Sigmoid colon (tissue), 7 donors: ENCODE measurements at regions of chr2 and their contacts with region 1.

Region 1: GRCh38 chr2:30404319-30404953 is 42.6 kb upstream of the LCLAT1 start:
- DNase-seq: no peak
- H3K4me3 ChIP-seq: no peak overlapping the region
- H3K27ac ChIP-seq: peak overlapping the region; percentile 39 to 70 (median 60)
- H3K4me1 ChIP-seq: peaks cover 0 to 99% (median 92%) of the 10 kb centered on the region in 4 donors
- H3K27me3 ChIP-seq: no peaks in the 10 kb centered on the region
- CTCF ChIP-seq: no peak
- EP300 ChIP-seq: no peak
- POLR2A ChIP-seq: no peak

Region 2: DNA sequence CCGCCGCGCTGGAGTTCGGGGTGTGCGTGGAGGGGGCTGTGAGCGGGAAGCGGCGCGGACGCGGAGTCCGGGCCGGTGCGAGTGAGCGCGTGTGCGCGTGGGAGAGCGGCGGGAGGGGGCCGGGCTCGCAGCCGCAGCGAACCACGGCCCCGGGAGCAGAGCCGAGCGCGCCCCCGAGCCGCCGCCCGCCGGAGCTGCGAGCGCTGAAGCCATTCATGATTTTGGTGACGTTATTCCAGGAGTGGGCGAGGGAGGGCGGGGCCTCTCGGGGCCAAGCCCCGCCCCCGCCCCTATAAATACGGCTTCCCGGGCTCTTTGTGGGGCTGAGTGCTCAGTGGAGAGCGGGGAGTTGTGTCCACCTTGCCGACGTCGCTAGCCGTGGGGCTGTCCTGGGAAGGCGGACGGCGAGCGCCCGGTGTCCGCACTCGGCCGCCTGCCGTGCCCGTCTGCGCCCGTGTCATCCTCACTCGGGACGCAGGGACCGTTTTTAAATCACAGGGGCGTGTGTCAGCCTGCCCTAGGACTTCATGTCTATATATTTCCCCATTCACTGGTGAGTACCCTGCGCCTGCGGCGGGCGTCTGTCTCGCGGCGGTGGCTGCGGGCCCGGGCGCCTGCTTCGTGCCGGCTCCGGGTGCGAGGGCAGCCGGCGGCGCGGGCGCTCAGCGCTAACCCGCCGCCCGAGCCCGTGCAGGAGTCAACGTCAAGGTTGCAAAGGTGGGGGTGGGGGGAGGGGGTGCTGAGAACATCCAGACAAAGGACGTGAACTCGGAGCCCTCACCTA is 173.0 kb before region 1 on chr2 and contains the start of gene LBH:
- intact Hi-C with region 1: loop called (anchors 5 kb)
- DNase-seq: peak; percentile 93
- H3K4me3 ChIP-seq: peak within 1 kb of the TSS; percentile 68 to 79 (median 72)
- H3K27ac ChIP-seq: peak within 1 kb of the TSS; percentile 86 to 93 (median 92)
- H3K4me1 ChIP-seq: peaks cover 0 to 45% (median 33%) of the 10 kb centered on the region in 4 donors
- H3K27me3 ChIP-seq: no peaks in the 10 kb centered on the region
- CTCF ChIP-seq: no peak
- EP300 ChIP-seq: no peak
- POLR2A ChIP-seq: peak; percentile 92 to 99
- total RNA-seq, gene LBH: 11.4 to 25.0 (median 22.2) TPM

Region 3: DNA sequence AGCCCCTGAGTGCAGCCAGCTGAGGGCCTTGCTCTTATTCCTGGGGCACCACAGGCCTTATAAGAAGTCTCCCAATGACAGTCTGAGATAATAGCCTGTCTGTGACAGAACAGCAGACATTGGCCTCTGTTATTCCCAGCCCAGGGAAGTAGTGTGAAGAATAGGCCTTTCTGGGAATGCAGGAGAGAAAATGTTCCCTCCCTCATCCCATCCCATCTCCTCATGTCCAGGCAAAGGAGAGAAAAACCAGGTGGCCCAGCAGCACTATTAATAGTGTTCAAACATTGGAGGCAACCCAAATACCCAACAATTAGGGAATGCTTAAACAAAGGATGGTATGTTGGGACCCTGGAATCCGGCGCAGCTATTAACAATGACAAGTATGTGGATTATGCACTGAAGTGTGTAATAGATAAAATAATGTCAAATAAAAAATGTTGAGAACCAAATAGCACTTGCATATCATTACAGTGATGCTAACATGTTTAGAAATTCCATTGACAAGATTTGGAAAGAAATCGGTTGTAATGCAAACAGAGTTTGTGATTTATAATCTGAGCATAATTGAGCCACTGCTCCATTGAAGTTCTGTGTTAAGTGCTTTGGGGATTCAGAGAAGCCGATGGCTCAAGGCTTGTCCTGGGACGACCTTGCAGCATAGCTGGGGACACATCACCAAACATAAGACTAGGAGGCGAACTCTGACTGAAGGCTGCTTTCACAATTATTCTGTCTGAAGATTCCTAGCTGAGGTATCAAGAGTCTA is 103.8 kb before region 1 on chr2:
- intact Hi-C with region 1: loop called (anchors 5 kb)
- DNase-seq: no peak
- H3K4me3 ChIP-seq: no peak overlapping the region
- H3K27ac ChIP-seq: peak overlapping the region; percentile 73 to 88 (median 82)
- H3K4me1 ChIP-seq: peaks cover 0 to 27% (median 24%) of the 10 kb centered on the region in 4 donors
- H3K27me3 ChIP-seq: no peaks in the 10 kb centered on the region
- CTCF ChIP-seq: no peak
- EP300 ChIP-seq: peak in 3 of 4 donors; percentile 56 to 63 (median 61)
- POLR2A ChIP-seq: no peak

Region 4: GRCh38 chr2:30362468-30363081 is 41.9 kb before region 1 on chr2:
- intact Hi-C with region 1: loop called (anchors 5 kb)
- DNase-seq: no peak
- H3K4me3 ChIP-seq: no peak overlapping the region
- H3K27ac ChIP-seq: peak overlapping the region; percentile 42 to 88 (median 82)
- H3K4me1 ChIP-seq: peaks cover 0 to 48% (median 37%) of the 10 kb centered on the region in 4 donors
- H3K27me3 ChIP-seq: no peaks in the 10 kb centered on the region
- CTCF ChIP-seq: no peak
- EP300 ChIP-seq: no peak
- POLR2A ChIP-seq: no peak

Region 5: DNA sequence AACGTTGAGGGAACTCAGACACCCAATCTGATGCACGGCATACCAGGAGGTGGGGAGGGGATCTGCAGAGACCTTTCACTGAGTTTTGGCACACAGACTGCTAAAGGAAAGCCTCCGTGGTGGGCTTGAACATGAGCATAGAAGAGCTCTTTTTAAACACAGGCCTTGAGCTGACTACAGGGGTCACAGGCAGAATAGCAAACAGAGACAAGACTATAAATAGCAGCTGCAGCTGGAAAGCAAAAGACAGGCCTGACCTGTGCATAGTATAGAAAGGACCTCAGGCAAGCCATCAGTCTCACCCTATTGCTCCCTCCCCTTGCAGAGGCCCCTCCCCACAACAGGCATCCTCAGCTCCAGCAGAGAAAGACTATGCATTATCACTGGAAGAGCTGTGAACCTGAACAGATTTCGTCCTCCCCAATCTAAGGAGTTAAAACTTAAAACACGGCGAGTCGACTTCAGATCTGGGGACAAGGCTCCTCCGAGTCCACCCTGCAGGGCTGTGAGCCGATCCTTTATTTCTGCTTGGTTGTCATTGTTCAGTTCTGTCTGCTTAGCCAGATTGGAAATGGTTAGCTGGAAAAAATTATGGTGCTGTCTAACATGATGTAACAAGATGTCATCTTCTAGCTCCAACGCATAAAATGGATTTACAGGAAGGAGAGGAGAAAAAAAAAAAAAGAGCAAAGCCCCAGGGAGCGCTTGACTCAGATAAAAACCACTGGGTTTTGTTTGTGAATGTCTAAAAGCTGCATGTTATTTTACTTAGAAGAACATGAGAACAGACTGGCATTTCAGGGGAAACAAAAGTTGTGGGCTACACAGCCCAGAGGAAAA is 17.4 kb after region 1 on chr2:
- intact Hi-C with region 1: no loop called
- DNase-seq: no peak
- H3K4me3 ChIP-seq: no peak overlapping the region
- H3K27ac ChIP-seq: peak overlapping the region; percentile 43 to 74 (median 68)
- H3K4me1 ChIP-seq: peaks cover 0 to 34% (median 26%) of the 10 kb centered on the region in 4 donors
- H3K27me3 ChIP-seq: no peaks in the 10 kb centered on the region
- CTCF ChIP-seq: no peak
- EP300 ChIP-seq: peak in 1 of 4 donors; percentile 9
- POLR2A ChIP-seq: no peak

Region 6: GRCh38 chr2:30447149-30448045 is 43.0 kb after region 1 on chr2 and contains the start of gene LCLAT1:
- intact Hi-C with region 1: loop called (anchors 2 kb)
- DNase-seq: peak; percentile 89
- H3K4me3 ChIP-seq: peak within 1 kb of the TSS; percentile 77 to 98 (median 86)
- H3K27ac ChIP-seq: peak within 1 kb of the TSS; percentile 76 to 87 (median 85)
- H3K4me1 ChIP-seq: peaks cover 0 to 20% (median 14%) of the 10 kb centered on the region in 4 donors
- H3K27me3 ChIP-seq: no peaks in the 10 kb centered on the region
- CTCF ChIP-seq: peak in 1 of 4 experiments; percentile 7
- EP300 ChIP-seq: no peak
- POLR2A ChIP-seq: no peak
- total RNA-seq, gene LCLAT1: 10.0 to 17.2 (median 13.4) TPM

Region 7: GRCh38 chr2:30666307-30666874 is 262.0 kb after region 1 on chr2:
- intact Hi-C with region 1: loop called (anchors 5 kb)
- DNase-seq: peak; percentile 85
- H3K4me3 ChIP-seq: no peak overlapping the region
- H3K27ac ChIP-seq: peak overlapping the region; percentile 12 to 84 (median 72)
- H3K4me1 ChIP-seq: peaks cover 0 to 27% (median 22%) of the 10 kb centered on the region in 4 donors
- H3K27me3 ChIP-seq: no peaks in the 10 kb centered on the region
- CTCF ChIP-seq: no peak
- EP300 ChIP-seq: peak in 2 of 4 donors; percentile 6 to 82
- POLR2A ChIP-seq: no peak